Lower leg skin (tissue), 4 donors: ENCODE measurements at regions of chr9 and their contacts with region 1.

Region 1: GRCh38 chr9:112677040-112677439 is 40.9 kb downstream of the INIP start:
- DNase-seq: no peak
- H3K4me3 ChIP-seq: no peak overlapping the region
- CTCF ChIP-seq: no peak
- POLR2A ChIP-seq: no peak

Region 2: GRCh38 chr9:112620388-112620787 is 56.7 kb before region 1 on chr9:
- intact Hi-C with region 1: no loop called
- DNase-seq: no peak
- H3K4me3 ChIP-seq: no peak overlapping the region
- CTCF ChIP-seq: no peak
- POLR2A ChIP-seq: no peak

Region 3: GRCh38 chr9:112664531-112664930 is 12.5 kb before region 1 on chr9:
- intact Hi-C with region 1: loop called (anchors 1 kb)
- DNase-seq: no peak
- H3K4me3 ChIP-seq: no peak overlapping the region
- CTCF ChIP-seq: no peak
- POLR2A ChIP-seq: no peak

Region 4: GRCh38 chr9:113943112-113944009 is 1266.3 kb after region 1 on chr9:
- intact Hi-C with region 1: no loop called
- DNase-seq: peak in 1 of 2 donors; percentile 71
- H3K4me3 ChIP-seq: no peak overlapping the region
- CTCF ChIP-seq: no peak
- POLR2A ChIP-seq: no peak